ENCODE measurements at regions of chr18 and their contacts with region 1.

Region 1: DNA sequence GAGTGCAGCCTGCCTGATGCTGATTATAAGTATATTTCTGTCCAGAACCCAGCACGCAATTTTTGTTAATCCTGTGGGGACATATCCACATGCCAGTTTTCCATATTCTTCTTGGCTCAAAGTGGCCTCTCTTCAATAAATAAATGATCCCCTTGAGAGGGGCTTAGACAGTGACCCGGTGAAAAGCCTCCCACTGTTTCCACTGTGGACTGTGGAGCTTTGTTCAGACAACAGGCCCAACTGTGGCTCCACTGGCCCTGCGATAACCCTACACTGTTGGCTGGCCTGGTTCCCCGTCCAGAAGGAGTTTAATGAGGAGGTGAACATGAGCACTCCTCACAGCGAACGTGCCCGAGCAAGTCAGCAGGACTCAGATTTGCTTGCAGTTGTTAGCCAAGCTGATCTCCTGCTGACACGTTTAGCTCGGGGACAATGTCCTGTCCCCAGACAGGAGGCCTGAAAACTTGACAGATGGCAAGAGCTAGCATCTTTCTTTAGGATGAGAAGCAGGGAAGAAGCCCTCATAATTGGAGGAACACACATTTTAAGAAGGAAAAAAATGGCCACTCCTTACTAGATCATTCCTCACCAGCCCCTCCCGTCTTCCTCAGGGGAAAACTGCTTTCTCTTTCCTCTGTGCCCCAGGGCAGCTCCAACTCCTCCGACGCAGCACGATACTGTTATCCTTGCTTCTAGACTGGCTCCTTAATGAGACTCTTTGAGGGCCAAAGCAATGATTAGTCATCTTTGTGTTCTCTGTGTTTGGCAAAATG is 20.0 kb upstream of the MTCL1 start:
- DNase-seq: no peak
- H3K4me3 ChIP-seq: no peak overlapping the region
- H3K27ac ChIP-seq: no peak overlapping the region
- H3K4me1 ChIP-seq: peaks cover 0 to 11% (median 5%) of the 10 kb centered on the region in 4 experiments
- H3K27me3 ChIP-seq: no peaks in the 10 kb centered on the region
- CTCF ChIP-seq: no peak
- EP300 ChIP-seq: no peak
- POLR2A ChIP-seq: no peak
- RAD21 ChIP-seq: no peak

Region 2: GRCh38 chr18:8696749-8697211 is 11.5 kb after region 1 on chr18:
- CTCF ChIA-PET with region 1: interaction called, 21 read pairs
- POLR2A ChIA-PET with region 1: interaction called, 3 read pairs
- DNase-seq: peak in 1 of 2 experiments; percentile 95
- H3K4me3 ChIP-seq: no peak overlapping the region
- H3K27ac ChIP-seq: no peak overlapping the region
- H3K4me1 ChIP-seq: no peaks in the 10 kb centered on the region
- H3K27me3 ChIP-seq: no peaks in the 10 kb centered on the region
- CTCF ChIP-seq: peak; percentile 72 to 82 (median 75)
- EP300 ChIP-seq: no peak
- POLR2A ChIP-seq: no peak
- RAD21 ChIP-seq: peak; percentile 73 to 79